ENCODE measurements at regions of chr3 and their contacts with region 1.

Region 1: DNA sequence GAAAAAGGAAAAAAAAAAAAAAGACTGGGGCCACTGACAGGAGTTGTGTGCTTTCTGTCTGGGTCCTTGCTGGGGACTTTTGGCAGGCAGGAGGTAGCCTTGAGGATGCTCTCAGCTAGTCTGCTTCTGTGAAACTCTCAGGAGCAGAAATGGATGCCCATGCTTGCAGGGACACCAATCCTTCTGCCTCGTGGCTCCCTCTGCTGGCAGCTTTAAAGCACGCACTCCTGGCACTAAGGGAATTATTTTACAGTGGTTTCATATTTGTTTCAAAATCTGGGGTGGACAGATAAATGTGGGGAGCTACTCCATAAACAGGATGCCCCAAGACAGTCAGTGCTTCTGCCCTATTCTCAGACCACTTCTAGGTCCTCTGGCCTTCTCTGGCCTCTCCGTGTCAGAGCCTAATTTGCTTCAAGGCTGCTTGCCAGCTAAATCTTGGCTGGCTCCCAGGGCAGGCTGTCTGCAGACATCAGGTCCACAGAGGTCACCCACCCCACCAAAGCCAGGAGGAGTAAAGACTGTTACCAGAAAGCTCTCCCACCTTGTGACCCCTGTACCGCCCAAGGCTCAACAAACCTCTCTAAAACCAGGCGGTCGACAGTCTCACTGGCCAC is 17.1 kb downstream of the TRAIP start:
- DNase-seq: peak; percentile 80
- H3K4me3 ChIP-seq: no peak overlapping the region
- H3K27ac ChIP-seq: no peak overlapping the region
- H3K4me1 ChIP-seq: no peaks in the 10 kb centered on the region
- H3K27me3 ChIP-seq: no peaks in the 10 kb centered on the region
- CTCF ChIP-seq: peak; percentile 86

Region 2: DNA sequence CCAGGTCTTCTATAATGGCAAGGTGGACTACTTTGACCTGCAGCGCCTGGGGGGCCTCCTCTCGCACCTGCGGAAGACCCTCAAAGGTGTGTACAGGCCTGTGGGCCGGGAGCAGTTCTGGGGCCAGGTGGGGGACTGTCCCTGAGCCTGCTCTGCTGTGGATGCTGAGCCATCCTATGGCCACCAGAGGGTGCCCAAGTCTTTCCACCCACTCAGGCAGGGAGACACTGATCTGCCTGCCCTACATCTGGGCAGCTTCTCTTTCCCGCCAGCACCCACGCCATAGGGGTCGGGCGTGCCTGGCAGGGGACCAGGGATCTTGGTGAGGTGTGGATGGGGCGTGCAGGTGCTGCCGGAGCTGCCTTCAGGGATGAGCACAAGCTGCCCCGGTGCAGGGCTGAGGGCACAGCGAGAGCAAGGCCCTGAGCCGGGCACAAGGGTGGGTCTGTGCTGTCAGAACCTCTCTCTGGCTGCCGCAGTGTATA is 135.8 kb before region 1 on chr3:
- intact Hi-C with region 1: loop called (anchors 2 kb)
- DNase-seq: peak; percentile 65
- H3K4me3 ChIP-seq: no peak overlapping the region
- H3K27ac ChIP-seq: no peak overlapping the region
- H3K4me1 ChIP-seq: no peaks in the 10 kb centered on the region
- H3K27me3 ChIP-seq: no peaks in the 10 kb centered on the region
- CTCF ChIP-seq: peak; percentile 88

Region 3: DNA sequence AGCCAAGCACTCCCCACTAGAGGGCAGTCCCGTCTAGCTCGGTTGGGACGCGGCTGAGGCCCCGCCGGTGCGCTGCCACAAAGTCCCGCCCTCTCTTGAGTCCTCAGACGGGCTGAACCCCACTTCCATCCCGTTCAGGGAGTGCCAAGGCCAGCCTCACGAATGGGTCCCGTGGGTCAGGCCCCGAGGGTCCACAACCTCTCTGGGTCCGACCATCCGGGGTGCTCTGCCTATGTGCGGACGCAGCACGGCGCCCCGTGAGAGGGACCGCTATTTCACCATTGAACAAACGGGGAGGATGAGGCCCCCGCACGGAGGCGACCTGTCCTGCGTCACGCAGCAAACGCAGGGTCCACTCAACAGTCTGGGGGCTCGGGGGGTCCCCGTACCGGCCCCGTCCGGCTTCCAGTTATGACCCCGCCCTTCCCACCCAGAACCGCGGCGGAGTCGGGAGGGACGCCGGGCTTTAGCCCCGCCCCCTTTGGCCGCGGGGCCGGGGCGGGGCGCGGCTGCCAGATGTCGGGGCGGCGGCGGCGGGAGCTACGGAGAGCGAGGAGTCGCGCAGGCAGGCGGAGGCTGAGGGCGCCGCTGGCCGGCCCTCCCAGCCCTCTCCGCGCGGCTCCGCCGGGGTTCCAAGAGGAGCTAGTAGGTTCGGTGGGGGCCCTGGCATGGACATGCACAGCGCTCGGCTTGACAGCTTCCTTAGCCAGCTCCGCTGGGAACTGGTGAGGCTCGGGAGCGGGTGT is 36.4 kb before region 1 on chr3 and contains the start of gene INKA1:
- intact Hi-C with region 1: loop called (anchors 2 kb)
- DNase-seq: peak; percentile 95
- H3K4me3 ChIP-seq: peak within 1 kb of the TSS; percentile 62
- H3K27ac ChIP-seq: peak within 1 kb of the TSS; percentile 79
- H3K4me1 ChIP-seq: peaks cover 5% of the 10 kb centered on the region
- H3K27me3 ChIP-seq: peaks cover 7% of the 10 kb centered on the region
- CTCF ChIP-seq: no peak
- total RNA-seq, gene INKA1: 0.57 to 0.88 TPM

Region 4: GRCh38 chr3:50068134-50068533 is 228.8 kb after region 1 on chr3:
- intact Hi-C with region 1: no loop called
- DNase-seq: no peak
- H3K4me3 ChIP-seq: no peak overlapping the region
- H3K27ac ChIP-seq: no peak overlapping the region
- H3K4me1 ChIP-seq: no peaks in the 10 kb centered on the region
- H3K27me3 ChIP-seq: no peaks in the 10 kb centered on the region
- CTCF ChIP-seq: no peak

Measured in colonic mucosa (tissue), 4 donors.